WTC11 (cell line): ENCODE measurements at regions of chr11 and their contacts with region 1.

Region 1: DNA sequence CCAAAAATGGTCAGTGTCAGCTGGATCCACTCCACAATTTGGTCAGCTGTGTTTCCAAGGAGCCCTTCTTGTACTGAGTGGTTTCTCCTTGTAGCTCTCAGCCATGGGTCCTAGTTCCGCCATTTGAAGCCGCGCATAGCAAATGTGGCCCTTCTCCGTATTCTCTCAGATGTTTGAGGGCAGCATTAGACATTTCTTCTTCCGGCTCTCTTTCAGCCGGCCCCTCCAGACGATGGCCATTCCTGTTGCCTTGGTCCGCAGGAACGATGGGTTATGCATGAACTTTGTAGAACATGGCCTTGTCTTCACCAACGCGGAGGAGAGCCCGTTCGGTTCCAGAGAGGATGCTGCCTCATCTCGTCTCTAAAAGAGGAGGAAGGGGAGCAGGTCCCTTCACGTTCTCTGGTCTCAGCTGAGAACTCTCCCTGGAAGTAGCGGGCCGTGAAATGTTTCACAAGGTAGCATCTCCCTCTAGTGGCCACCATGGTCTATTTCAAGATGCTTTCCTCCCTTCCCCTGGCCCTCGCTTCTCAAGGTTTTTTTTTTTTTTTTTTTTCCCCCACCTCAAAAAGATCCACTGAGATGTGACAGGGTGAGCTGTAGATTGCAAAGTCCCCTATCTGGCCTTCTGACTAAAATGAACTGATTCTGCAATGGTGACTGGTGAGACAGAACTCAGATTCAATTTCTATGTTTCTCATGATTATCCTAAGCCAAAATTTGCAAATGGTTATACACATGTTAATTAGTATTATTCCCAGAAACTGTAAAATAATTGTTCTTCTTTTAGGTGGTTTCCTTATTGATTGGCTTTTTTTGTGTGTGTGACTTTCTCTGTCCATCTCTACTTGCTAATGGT is 19.8 kb upstream of the PLET1 start:
- DNase-seq: peak; percentile 50
- ATAC-seq: peak; percentile 73
- H3K4me3 Mint-ChIP-seq: peak overlapping the region; percentile 83
- H3K27ac Mint-ChIP-seq: no peak overlapping the region
- H3K4me1 Mint-ChIP-seq: peaks cover 18% of the 10 kb centered on the region
- H3K27me3 Mint-ChIP-seq: no peaks in the 10 kb centered on the region; the same call in 1 of the 2 replicates
- CTCF ChIP-seq: peak; percentile 52

Region 2: DNA sequence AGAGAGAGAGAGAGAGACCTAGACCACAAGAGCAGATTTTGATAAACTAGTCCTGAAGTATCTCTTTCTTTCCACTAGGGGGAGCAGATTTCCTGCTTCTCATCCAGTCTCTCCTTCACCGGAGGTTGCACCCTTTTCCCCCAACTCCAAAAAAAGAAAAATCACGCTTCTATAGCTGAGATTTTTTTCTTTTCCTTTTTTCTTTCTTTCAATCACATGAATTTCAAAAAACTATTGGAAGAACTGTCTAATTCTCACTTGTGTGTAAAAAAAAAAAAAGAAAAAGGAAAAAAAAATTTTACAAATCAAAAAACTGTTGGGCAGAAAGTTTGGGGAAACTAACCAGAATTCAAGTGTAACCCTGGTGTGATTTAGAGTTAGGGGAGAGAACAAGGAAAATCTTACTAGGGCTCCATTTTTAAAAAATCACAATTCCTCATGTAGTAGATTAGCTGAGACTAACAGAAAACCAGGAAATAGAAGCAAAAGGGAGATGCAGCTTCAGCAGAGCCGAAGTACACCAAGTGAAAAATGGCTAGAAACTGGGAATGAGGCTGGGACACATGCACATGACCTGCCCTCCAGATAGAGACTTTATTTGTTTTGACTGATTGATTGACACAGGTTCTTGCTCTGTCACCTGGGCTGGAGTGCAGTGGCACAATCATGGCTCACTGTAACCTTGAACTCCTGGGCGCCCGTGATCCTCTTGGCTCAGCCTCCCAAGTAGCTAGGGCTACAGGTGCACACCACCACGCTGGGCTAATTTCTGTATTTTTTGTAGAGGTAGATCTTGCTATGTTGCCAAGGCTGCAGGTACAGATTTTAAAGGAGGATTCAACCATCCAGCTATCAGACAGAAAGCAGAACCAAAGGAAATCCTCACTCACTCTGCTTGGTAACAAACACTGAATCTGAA is 166.7 kb before region 1 on chr11:
- CTCF ChIA-PET with region 1: interaction called, 29 read pairs
- POLR2A ChIA-PET with region 1: no interaction called
- DNase-seq: no peak
- ATAC-seq: peak; percentile 78
- H3K4me3 Mint-ChIP-seq: no peak overlapping the region
- H3K27ac Mint-ChIP-seq: no peak overlapping the region
- H3K4me1 Mint-ChIP-seq: no peaks in the 10 kb centered on the region
- H3K27me3 Mint-ChIP-seq: no peaks in the 10 kb centered on the region
- CTCF ChIP-seq: peak; percentile 45; the same call in 1 of the 2 replicates

Region 3: GRCh38 chr11:112219476-112220232 is 60.8 kb before region 1 on chr11:
- CTCF ChIA-PET with region 1: interaction called, 49 read pairs
- POLR2A ChIA-PET with region 1: no interaction called
- DNase-seq: no peak
- ATAC-seq: peak; percentile 98
- H3K4me3 Mint-ChIP-seq: no peak overlapping the region
- H3K27ac Mint-ChIP-seq: no peak overlapping the region
- H3K4me1 Mint-ChIP-seq: no peaks in the 10 kb centered on the region
- H3K27me3 Mint-ChIP-seq: peaks cover 34% of the 10 kb centered on the region
- CTCF ChIP-seq: peak; percentile 54; the same call in 1 of the 2 replicates

Region 4: DNA sequence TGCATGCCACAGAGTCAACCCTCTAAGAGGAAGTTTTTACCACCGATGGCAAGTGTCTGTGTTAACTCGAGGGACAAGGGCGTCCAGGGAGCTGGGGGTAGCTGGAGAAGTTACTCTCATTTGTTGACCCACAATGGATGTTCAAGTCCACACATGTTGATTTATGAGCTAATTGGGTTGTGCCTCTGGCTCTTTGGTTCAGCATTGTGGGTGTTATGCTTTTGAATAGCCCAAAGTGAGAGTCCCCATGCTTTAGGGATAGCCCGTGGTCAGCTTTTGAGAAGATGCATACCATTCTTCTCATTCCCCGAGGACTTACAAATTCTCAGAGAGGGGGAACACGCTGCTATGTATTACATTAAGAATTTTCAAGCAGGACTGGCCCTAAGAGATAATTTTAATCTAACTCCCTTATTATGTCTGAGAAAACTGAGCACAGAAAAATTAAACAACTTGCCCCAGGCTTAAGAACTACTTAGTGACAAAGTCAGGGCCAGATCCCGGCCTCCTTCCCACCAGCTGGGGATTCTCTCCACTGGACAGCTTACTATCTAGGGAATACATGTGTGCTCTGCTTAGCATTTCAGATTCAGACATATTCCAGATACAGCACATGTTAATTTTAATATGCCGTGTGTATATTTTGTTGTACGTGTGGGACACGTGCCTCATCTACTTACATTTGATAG is 14.6 kb before region 1 on chr11:
- CTCF ChIA-PET with region 1: interaction called, 22 read pairs
- POLR2A ChIA-PET with region 1: no interaction called
- DNase-seq: no peak
- ATAC-seq: no peak
- H3K4me3 Mint-ChIP-seq: no peak overlapping the region
- H3K27ac Mint-ChIP-seq: no peak overlapping the region
- H3K4me1 Mint-ChIP-seq: peaks cover 6% of the 10 kb centered on the region
- H3K27me3 Mint-ChIP-seq: no peaks in the 10 kb centered on the region
- CTCF ChIP-seq: no peak

Region 5: DNA sequence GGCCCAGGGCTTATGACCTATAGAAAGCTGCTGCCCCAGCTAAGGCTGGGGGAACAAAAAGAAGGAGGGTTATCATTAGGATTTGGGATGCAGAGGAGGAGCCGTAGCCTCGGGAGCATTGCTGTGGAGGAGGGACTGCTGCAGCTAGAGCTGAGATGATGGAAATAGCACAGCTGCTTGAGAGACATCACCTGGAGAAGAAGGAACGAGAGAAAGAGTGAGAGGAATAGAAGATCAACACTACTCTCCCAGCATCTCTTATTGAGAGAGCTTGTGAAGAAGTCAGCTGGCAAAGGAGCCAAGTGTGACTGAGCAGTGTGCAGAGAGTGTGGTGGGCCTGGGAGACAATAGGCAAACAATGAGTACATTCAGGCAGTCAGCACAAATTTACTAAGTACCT is 80.9 kb after region 1 on chr11:
- CTCF ChIA-PET with region 1: no interaction called
- POLR2A ChIA-PET with region 1: no interaction called
- DNase-seq: no peak
- ATAC-seq: no peak
- H3K4me3 Mint-ChIP-seq: no peak overlapping the region
- H3K27ac Mint-ChIP-seq: no peak overlapping the region
- H3K4me1 Mint-ChIP-seq: peaks cover 12% of the 10 kb centered on the region
- H3K27me3 Mint-ChIP-seq: no peaks in the 10 kb centered on the region; the same call in 1 of the 2 replicates
- CTCF ChIP-seq: no peak

Region 6: GRCh38 chr11:112440518-112440917 is 160.0 kb after region 1 on chr11:
- CTCF ChIA-PET with region 1: interaction called, 10 read pairs
- POLR2A ChIA-PET with region 1: no interaction called
- DNase-seq: peak; percentile 62
- ATAC-seq: peak; percentile 96
- H3K4me3 Mint-ChIP-seq: no peak overlapping the region
- H3K27ac Mint-ChIP-seq: no peak overlapping the region
- H3K4me1 Mint-ChIP-seq: peaks cover 4% of the 10 kb centered on the region
- H3K27me3 Mint-ChIP-seq: peaks cover 4% of the 10 kb centered on the region
- CTCF ChIP-seq: peak; percentile 67